Activated CD8-positive, alpha-beta T cell treated with anti-CD3 and anti-CD28 coated beads for 36 hours (primary cell): ENCODE measurements at regions of chr6 and their contacts with region 1.

Region 1: DNA sequence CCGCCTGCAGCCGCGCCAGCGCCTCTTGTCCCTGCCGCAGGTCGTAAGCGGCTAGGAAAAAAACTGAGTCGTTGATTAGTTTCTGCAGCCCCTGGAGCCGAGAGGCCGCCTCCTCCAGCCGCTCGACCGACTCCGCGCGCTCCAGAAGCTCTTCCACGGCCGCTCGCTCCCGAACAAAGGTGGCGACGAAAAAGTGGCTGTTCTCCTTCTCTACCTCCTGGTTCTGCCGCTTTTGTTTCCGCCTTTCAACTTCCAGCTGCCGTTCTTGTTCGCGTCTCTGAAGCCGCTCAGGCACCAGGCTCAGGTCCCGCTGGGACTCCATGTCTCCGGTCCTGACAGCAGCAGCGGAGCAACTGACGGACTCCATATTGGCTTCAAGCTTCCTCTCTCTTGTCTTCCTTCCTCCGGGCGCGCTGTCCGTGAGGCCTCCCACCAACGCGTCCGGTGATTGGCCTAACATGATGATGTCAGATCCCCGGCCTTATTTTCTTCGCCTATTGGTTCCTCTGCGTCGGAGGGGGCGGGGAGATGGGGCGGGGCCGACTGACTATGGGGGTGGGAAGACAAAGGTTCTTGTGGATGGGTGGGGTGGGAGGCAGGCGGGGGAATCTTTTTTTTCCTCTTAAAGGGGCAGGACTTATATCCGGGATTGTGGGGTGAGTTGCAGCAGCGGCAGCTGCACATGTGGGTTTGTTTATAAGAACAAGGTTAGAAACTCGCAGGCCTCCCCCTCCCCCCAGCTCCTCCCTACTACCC is at the start of gene TBCC:
- DNase-seq: peak; percentile 97
- ATAC-seq: peak; percentile 79
- H3K4me3 Mint-ChIP-seq: peak within 1 kb of the TSS; percentile 90
- H3K27ac Mint-ChIP-seq: peak within 1 kb of the TSS; percentile 100
- H3K4me1 Mint-ChIP-seq: peaks cover 27% of the 10 kb centered on the region
- H3K27me3 Mint-ChIP-seq: no peaks in the 10 kb centered on the region
- CTCF ChIP-seq: no peak
- total RNA-seq, gene TBCC: 16.0 to 16.3 TPM

Region 2: GRCh38 chr6:42726485-42727086 is 19.3 kb before region 1 on chr6:
- CTCF ChIA-PET with region 1: interaction called, 11 read pairs
- POLR2A ChIA-PET with region 1: interaction called, 10 read pairs
- intact Hi-C with region 1: no loop called
- DNase-seq: peak; percentile 88
- ATAC-seq: peak; percentile 98
- H3K4me3 Mint-ChIP-seq: peak overlapping the region; percentile 75
- H3K27ac Mint-ChIP-seq: peak overlapping the region; percentile 96
- H3K4me1 Mint-ChIP-seq: peaks cover 16% of the 10 kb centered on the region
- H3K27me3 Mint-ChIP-seq: no peaks in the 10 kb centered on the region
- CTCF ChIP-seq: peak; percentile 94

Region 3: DNA sequence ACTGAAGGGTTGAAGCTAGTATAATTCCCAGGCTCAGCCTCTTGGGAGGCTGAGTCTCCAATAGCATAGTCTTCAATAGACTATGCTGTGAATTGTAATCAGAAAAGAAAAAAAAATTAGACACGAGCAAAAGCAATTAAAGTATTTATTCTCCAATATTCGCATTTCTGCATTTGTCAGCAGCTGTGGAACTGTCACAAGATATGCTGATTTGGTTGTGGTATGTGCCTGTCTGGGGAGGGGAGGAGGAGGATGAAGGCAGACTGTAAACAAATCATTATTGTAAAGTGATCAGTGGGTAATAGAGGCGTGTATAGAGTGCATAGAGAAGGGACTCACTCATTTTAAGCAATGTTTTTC is 25.8 kb after region 1 on chr6:
- CTCF ChIA-PET with region 1: interaction called, 17 read pairs
- POLR2A ChIA-PET with region 1: interaction called, 82 read pairs
- intact Hi-C with region 1: loop called (anchors 2 kb)
- DNase-seq: no peak
- ATAC-seq: no peak
- H3K4me3 Mint-ChIP-seq: peak overlapping the region; percentile 74
- H3K27ac Mint-ChIP-seq: peak overlapping the region; percentile 100
- H3K4me1 Mint-ChIP-seq: peaks cover 53% of the 10 kb centered on the region
- H3K27me3 Mint-ChIP-seq: no peaks in the 10 kb centered on the region
- CTCF ChIP-seq: no peak

Region 4: GRCh38 chr6:42777126-42777822 is 31.4 kb after region 1 on chr6:
- CTCF ChIA-PET with region 1: interaction called, 4 read pairs
- POLR2A ChIA-PET with region 1: interaction called, 119 read pairs
- intact Hi-C with region 1: loop called (anchors 5 kb)
- DNase-seq: no peak
- ATAC-seq: no peak
- H3K4me3 Mint-ChIP-seq: no peak overlapping the region
- H3K27ac Mint-ChIP-seq: peak overlapping the region; percentile 58
- H3K4me1 Mint-ChIP-seq: peaks cover 62% of the 10 kb centered on the region
- H3K27me3 Mint-ChIP-seq: no peaks in the 10 kb centered on the region
- CTCF ChIP-seq: no peak

Region 5: GRCh38 chr6:42782622-42783176 is 36.8 kb after region 1 on chr6:
- CTCF ChIA-PET with region 1: interaction called, 3 read pairs
- POLR2A ChIA-PET with region 1: interaction called, 119 read pairs
- intact Hi-C with region 1: loop called (anchors 5 kb)
- DNase-seq: peak; percentile 73
- ATAC-seq: peak; percentile 60
- H3K4me3 Mint-ChIP-seq: peak overlapping the region; percentile 75
- H3K27ac Mint-ChIP-seq: peak overlapping the region; percentile 100
- H3K4me1 Mint-ChIP-seq: peaks cover 35% of the 10 kb centered on the region
- H3K27me3 Mint-ChIP-seq: no peaks in the 10 kb centered on the region
- CTCF ChIP-seq: no peak

Region 6: GRCh38 chr6:42879372-42880239 is 133.7 kb after region 1 on chr6 and contains the start of gene RPL7L1:
- CTCF ChIA-PET with region 1: interaction called, 8 read pairs
- POLR2A ChIA-PET with region 1: interaction called, 38 read pairs
- intact Hi-C with region 1: loop called (anchors 10 kb)
- DNase-seq: peak; percentile 87
- ATAC-seq: peak; percentile 96
- H3K4me3 Mint-ChIP-seq: peak within 1 kb of the TSS; percentile 98
- H3K27ac Mint-ChIP-seq: peak within 1 kb of the TSS; percentile 100
- H3K4me1 Mint-ChIP-seq: peaks cover 18% of the 10 kb centered on the region
- H3K27me3 Mint-ChIP-seq: no peaks in the 10 kb centered on the region
- CTCF ChIP-seq: no peak
- total RNA-seq, gene RPL7L1: 135 to 137 TPM

Region 7: GRCh38 chr6:42890311-42891198 is 144.7 kb after region 1 on chr6:
- CTCF ChIA-PET with region 1: no interaction called
- POLR2A ChIA-PET with region 1: interaction called, 11 read pairs
- intact Hi-C with region 1: no loop called
- DNase-seq: peak; percentile 96
- ATAC-seq: peak; percentile 93
- H3K4me3 Mint-ChIP-seq: peak overlapping the region; percentile 79
- H3K27ac Mint-ChIP-seq: peak overlapping the region; percentile 92
- H3K4me1 Mint-ChIP-seq: peaks cover 28% of the 10 kb centered on the region
- H3K27me3 Mint-ChIP-seq: no peaks in the 10 kb centered on the region
- CTCF ChIP-seq: no peak

Region 8: DNA sequence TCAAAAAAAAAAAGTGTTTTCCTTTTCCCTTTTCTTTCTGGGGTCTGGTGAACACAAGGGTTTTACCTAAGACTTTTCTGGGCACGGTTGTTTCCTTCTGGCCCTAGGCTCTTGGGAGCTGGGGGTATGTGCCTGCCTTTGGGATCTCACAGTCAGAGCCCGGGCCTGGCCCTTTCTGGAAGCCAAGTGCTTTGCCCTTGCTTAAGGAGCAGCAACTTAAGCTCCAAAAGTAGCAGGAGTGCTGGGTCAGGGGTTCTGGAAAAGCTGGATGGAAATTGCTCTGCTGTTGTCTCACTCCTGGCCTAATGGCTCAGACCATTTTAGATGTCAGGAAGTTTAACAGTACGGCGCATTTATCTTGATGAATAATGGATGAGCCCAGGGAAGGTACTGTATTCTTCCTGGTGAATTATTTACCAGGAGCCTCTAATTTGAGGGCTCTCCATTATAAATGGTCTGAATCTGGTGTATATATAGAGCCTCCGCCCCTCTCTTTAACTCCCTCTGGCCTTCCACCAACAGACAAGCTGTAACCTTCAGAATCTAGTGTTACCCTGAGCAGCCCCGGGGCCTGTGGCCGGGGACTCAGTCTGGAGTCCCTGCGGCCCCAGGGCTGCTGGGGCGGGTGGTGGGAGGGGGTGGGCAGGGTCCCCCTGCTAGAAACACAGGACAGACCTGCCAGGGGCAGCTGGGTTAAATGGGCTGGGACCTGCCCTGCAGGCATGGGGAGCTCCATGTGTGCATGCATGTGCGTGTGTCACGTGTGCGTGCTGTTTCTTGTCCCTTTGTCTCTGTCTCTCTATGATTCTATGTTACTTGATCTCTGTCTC is 367.8 kb after region 1 on chr6:
- CTCF ChIA-PET with region 1: no interaction called
- POLR2A ChIA-PET with region 1: no interaction called
- intact Hi-C with region 1: no loop called
- DNase-seq: no peak
- ATAC-seq: no peak
- H3K4me3 Mint-ChIP-seq: no peak overlapping the region
- H3K27ac Mint-ChIP-seq: no peak overlapping the region
- H3K4me1 Mint-ChIP-seq: no peaks in the 10 kb centered on the region
- H3K27me3 Mint-ChIP-seq: no peaks in the 10 kb centered on the region
- CTCF ChIP-seq: no peak